Mammary epithelial cell (primary cell): ENCODE measurements at regions of chr10 and their contacts with region 1.

Region 1: DNA sequence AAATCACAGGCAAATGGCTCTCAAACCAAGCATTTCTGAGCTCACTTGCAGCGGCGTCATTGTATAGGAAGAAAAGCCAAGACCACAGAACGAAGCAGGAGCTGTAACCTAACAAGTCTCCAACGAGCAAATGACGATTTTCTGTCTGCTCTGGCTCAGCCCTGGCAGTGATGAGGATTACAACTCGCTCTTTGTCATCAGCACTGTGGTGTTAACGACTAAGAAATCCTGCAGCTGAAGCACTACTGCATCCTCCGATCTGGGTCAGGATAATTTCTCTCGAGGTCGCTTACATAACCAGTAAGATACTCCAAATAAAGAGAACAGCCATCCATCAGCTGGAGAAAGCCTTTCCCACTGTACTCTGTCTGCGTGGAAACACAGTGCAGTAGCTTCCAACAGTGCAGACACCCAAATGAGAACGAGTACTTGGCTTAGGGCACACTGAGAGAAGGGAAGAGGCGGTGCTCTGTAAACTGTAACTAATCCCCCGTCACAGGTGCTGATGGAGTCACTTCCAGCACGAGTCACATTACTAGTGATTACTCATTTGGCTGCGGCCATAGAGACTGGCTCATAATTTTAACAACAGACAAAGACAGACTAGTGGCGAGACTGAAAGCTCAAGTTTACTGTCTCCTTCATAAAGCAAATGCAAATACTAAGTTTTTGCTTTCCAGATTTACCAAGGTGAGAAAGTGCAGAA is 135.8 kb downstream of the NRBF2 start:
- DNase-seq: peak; percentile 96
- H3K4me3 ChIP-seq: peak overlapping the region; percentile 49 to 100 (median 97)
- H3K27ac ChIP-seq: peak overlapping the region; percentile 98
- H3K4me1 ChIP-seq: peaks cover 5% of the 10 kb centered on the region
- H3K27me3 ChIP-seq: no peaks in the 10 kb centered on the region
- CTCF ChIP-seq: peak; percentile 32 to 41

Region 2: GRCh38 chr10:63217120-63217605 is 51.8 kb before region 1 on chr10:
- CTCF ChIA-PET with region 1: no interaction called
- dilution Hi-C with region 1: no loop called
- in situ Hi-C with region 1: no loop called
- intact Hi-C with region 1: loop called (anchors 5 kb)
- DNase-seq: peak; percentile 27
- H3K4me3 ChIP-seq: no peak overlapping the region
- H3K27ac ChIP-seq: no peak overlapping the region
- H3K4me1 ChIP-seq: no peaks in the 10 kb centered on the region
- H3K27me3 ChIP-seq: no peaks in the 10 kb centered on the region
- CTCF ChIP-seq: peak; percentile 59 to 64

Region 3: DNA sequence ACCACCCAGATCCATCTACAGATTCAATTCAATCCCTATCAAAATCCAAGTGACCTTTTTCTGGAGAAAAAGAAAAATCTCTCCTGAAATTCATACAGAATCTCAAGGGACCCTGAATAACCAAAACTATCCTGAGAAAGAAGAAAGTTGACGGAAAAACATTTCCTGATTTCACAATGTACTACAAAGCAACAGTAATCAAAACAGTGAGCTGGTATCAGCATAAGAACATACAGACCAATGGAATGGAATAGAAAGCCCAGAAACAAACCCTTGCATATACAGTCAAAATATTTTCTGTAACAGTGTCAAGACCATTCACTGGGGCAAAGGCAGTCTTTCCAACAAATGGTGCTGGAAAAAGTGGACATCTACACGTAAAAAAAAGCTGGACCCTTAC is 106.9 kb after region 1 on chr10:
- CTCF ChIA-PET with region 1: interaction called, 3 read pairs
- dilution Hi-C with region 1: no loop called
- in situ Hi-C with region 1: no loop called
- intact Hi-C with region 1: loop called (anchors 1 kb)
- DNase-seq: no peak
- H3K4me3 ChIP-seq: no peak overlapping the region
- H3K27ac ChIP-seq: no peak overlapping the region
- H3K4me1 ChIP-seq: peaks cover 17% of the 10 kb centered on the region
- H3K27me3 ChIP-seq: no peaks in the 10 kb centered on the region
- CTCF ChIP-seq: no peak

Region 4: DNA sequence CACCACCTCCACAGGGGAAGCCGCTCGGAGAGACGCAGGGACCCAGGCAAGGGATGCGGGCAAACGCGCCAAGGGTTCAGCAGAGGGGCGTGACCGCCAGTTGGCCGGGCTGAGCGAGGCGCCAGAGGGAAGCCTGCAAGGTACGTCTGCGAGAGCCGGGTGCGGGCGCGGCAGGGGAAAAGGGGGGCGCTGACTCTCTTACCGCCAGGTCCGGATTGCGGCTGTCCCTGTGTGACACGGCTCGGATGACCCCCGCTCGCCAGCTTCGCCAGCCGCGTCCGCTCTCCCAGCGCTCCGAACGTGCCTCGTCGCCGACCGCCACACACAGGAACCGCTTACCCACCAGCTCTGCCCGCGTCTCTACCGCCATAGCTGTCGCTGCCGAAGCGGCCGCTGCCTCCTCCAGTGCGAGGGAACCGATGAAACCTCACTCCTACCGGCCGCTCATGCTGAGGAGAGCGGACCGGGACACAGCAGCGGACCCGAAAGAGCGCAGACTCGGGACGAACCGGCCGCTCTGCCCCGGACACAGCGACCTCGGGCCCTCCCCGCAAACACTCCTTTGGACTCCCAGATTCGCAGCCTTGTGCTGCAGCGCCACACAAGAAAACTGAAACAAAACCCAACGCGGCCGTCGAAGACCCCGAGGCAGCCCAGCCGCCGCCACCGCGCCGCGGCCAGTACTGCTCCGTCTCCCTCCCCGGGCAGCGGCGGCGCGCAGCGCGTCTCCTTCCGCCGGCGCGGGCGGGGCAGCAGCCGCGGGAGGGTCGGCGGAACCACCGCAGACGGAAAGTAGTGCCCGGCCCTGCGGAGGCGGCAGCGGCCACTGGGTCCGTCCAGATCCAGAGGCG is 196.6 kb after region 1 on chr10 and contains the start of gene JMJD1C:
- CTCF ChIA-PET with region 1: no interaction called
- dilution Hi-C with region 1: no loop called
- in situ Hi-C with region 1: no loop called
- intact Hi-C with region 1: loop called (anchors 1 kb)
- DNase-seq: peak; percentile 83
- H3K4me3 ChIP-seq: peak within 1 kb of the TSS; percentile 88 to 97 (median 92)
- H3K27ac ChIP-seq: peak within 1 kb of the TSS; percentile 88
- H3K4me1 ChIP-seq: peaks cover 4% of the 10 kb centered on the region
- H3K27me3 ChIP-seq: no peaks in the 10 kb centered on the region
- CTCF ChIP-seq: peak in 1 of 2 donors; percentile 1
- total RNA-seq, gene JMJD1C: 57.7 to 80.4 TPM

Region 5: DNA sequence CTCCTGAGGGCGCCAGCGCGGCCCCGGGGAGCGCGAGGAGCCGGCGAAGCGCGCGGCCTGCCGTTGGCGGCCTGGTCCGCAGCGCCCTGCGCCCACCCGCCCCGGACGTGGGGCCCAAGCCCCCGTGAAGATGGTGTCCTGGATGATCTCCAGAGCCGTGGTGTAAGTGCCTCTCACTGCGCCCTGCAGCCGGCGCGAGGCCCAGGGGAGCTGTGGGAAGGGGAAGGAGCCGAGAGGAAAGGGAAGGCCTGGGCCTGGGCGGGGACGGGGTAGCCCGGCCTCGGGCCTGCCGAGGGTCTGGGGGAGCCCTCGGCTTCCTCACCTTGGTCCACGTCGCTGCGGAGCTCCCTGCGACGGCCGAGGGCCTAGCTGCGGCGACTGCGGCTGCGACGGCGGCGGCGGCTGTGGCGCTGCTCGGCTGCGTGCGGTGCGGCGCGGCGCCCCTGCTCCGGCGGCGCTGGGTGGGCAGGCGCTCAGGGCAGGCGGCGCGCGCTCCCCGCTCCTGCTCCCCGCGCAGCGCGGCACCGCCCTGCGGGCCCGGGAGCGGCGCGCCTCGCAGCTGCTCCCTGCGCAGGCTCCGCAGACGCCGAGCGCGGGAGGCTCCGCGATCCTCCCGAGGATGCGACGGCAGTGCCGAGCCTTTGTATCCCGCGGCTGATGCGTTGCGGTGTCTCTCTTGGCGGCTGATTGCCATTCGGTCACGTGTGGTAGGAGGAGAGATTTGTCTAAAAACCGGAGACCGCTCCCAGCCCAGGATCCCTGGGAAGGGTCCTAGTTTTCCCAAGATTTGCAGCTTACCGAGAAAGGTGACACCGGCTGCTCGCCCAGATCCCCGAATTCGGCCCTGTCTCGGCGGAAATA is 252.7 kb after region 1 on chr10:
- CTCF ChIA-PET with region 1: no interaction called
- dilution Hi-C with region 1: no loop called
- in situ Hi-C with region 1: no loop called
- intact Hi-C with region 1: loop called (anchors 2 kb)
- DNase-seq: peak; percentile 66
- H3K4me3 ChIP-seq: peak overlapping the region; percentile 91 to 95 (median 92)
- H3K27ac ChIP-seq: peak overlapping the region; percentile 90
- H3K4me1 ChIP-seq: peaks cover 27% of the 10 kb centered on the region
- H3K27me3 ChIP-seq: no peaks in the 10 kb centered on the region
- CTCF ChIP-seq: no peak

Region 6: DNA sequence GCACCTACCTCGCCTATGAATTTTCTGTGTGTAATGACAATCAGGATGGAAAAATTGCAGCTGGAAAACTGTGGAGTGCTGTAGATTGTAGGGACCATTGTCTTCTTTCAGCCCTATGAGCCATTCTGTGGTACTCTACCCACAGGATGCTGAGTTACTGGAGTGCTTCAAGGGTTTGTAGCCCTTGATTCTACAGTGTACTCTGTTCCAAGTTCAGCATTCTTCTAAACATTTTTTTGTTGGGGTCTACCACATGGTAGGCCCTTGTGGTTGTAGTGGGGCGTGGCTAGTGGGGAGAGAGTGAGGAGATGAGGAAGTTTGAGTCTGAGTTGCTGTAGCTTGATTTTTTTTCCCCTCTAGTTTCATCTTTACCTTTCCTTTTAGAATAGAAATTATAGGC is 285.7 kb after region 1 on chr10:
- CTCF ChIA-PET with region 1: no interaction called
- dilution Hi-C with region 1: no loop called
- in situ Hi-C with region 1: no loop called
- intact Hi-C with region 1: loop called (anchors 2 kb)
- DNase-seq: peak; percentile 82
- H3K4me3 ChIP-seq: peak overlapping the region in 1 of 3 experiments; percentile 2
- H3K27ac ChIP-seq: peak overlapping the region; percentile 100
- H3K4me1 ChIP-seq: peaks cover 37% of the 10 kb centered on the region
- H3K27me3 ChIP-seq: no peaks in the 10 kb centered on the region
- CTCF ChIP-seq: no peak

Region 7: DNA sequence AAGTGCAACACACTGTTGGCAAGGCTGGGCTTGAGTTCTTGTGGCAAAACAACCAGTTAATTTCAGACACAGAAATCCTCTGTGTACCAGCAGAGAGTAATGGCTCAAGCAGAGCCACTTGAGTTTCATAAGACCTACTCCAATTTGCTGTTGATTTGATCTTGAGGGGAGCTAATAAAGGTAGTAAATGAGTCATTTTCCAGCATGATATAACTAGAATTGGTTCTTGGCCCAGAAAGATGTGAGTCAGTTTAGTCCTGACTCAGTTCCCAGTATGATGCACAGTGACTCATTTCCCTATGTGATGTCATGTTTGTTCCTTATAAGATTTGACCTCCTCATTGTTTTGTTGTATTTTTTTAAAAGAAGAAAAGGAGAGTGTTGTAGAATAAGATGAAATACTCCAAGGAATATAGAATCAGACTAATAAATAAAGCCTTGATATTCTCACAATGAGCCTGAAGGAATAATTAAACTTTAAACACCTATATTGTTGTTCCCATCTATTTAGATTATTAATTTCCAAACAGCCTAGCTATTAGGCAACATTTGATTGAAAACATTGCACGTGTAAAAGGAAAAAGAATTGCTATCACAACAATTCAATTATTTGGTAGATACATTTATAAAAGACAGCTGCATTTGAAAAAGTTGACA is 438.4 kb after region 1 on chr10:
- CTCF ChIA-PET with region 1: no interaction called
- dilution Hi-C with region 1: no loop called
- in situ Hi-C with region 1: no loop called
- intact Hi-C with region 1: loop called (anchors 5 kb)
- DNase-seq: peak; percentile 99
- H3K4me3 ChIP-seq: no peak overlapping the region
- H3K27ac ChIP-seq: peak overlapping the region; percentile 80
- H3K4me1 ChIP-seq: peaks cover 31% of the 10 kb centered on the region
- H3K27me3 ChIP-seq: no peaks in the 10 kb centered on the region
- CTCF ChIP-seq: no peak